Transverse colon (tissue), 4 donors: ENCODE measurements at regions of chr3 and their contacts with region 1.

Region 1: GRCh38 chr3:116388867-116389385 is 56.4 kb downstream of the LSAMP start:
- DNase-seq: no peak
- H3K4me3 ChIP-seq: no peak overlapping the region
- H3K27ac ChIP-seq: peak overlapping the region in 1 of 4 donors; percentile 24
- H3K4me1 ChIP-seq: peaks cover 0 to 6% (median 0%) of the 10 kb centered on the region in 4 donors
- H3K27me3 ChIP-seq: no peaks in the 10 kb centered on the region
- CTCF ChIP-seq: no peak
- EP300 ChIP-seq: no peak
- POLR2A ChIP-seq: no peak

Region 2: GRCh38 chr3:114542359-114542758 is 1846.6 kb before region 1 on chr3:
- in situ Hi-C with region 1: no loop called
- intact Hi-C with region 1: loop called (anchors 10 kb)
- DNase-seq: no peak
- H3K4me3 ChIP-seq: no peak overlapping the region
- H3K27ac ChIP-seq: no peak overlapping the region
- H3K4me1 ChIP-seq: no peaks in the 10 kb centered on the region
- H3K27me3 ChIP-seq: no peaks in the 10 kb centered on the region
- CTCF ChIP-seq: no peak
- EP300 ChIP-seq: no peak
- POLR2A ChIP-seq: no peak

Region 3: GRCh38 chr3:116399701-116400226 is 10.8 kb after region 1 on chr3:
- in situ Hi-C with region 1: no loop called
- intact Hi-C with region 1: loop called (anchors 1 kb)
- DNase-seq: no peak
- H3K4me3 ChIP-seq: no peak overlapping the region
- H3K27ac ChIP-seq: no peak overlapping the region
- H3K4me1 ChIP-seq: peaks cover 0 to 3% (median 0%) of the 10 kb centered on the region in 4 donors
- H3K27me3 ChIP-seq: no peaks in the 10 kb centered on the region
- CTCF ChIP-seq: no peak
- EP300 ChIP-seq: no peak
- POLR2A ChIP-seq: no peak

Region 4: GRCh38 chr3:116413319-116413718 is 24.4 kb after region 1 on chr3:
- in situ Hi-C with region 1: no loop called
- intact Hi-C with region 1: loop called (anchors 1 kb)
- DNase-seq: no peak
- H3K4me3 ChIP-seq: no peak overlapping the region
- H3K27ac ChIP-seq: no peak overlapping the region
- H3K4me1 ChIP-seq: no peaks in the 10 kb centered on the region
- H3K27me3 ChIP-seq: no peaks in the 10 kb centered on the region
- CTCF ChIP-seq: no peak
- EP300 ChIP-seq: no peak
- POLR2A ChIP-seq: no peak